ENCODE measurements at regions of chr22 and their contacts with region 1.

Region 1: DNA sequence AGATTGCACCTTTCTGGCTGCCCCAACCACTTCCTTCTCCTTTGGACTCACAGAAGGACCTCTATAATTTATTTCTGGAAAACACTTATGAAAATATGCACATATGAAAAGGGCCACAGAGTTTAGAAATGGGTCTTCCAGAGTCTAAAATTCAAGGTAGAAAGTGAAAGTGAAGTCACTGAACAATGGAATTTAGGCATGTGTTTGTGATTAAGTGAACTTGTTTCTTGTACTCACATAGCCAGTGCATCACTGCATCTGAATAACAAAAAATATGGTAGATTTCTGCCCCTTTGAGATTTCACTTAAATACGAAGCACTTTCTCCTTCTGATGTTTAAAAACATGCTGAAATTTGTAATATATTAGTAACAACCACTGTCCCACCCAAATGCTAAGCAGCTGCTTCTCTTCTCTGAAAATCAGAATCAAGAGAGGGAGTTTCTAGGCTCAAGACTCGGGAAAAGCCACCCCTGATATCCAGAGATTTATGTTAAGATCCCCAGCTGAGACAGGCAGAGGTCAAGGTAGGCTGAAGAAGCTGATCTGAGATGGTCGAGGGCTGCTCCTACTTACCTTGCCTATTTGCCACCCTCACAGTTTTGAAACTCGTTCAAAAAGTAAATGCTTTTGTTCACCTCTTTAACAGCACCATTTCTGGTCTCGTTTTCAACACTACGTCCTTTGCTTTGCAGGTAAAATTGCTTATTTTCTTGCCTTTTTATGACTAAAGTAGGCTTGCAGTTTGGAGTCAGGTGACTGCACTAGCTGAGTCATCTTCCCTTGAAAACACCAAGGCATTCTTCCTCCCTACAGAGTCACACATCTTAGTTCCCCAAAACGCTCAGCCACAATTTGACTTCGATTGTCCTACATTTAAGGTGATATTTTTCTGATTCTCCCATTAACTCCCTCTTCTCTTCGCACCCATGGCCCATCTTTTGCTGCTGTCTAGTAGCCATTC is at the start of gene XKR3:
- DNase-seq: peak; percentile 58
- H3K4me3 Mint-ChIP-seq: peak within 1 kb of the TSS; percentile 38
- H3K27ac Mint-ChIP-seq: peak within 1 kb of the TSS; percentile 54
- H3K4me1 Mint-ChIP-seq: peaks cover 19% of the 10 kb centered on the region
- H3K27me3 Mint-ChIP-seq: no peaks in the 10 kb centered on the region
- total RNA-seq, gene XKR3: not detected

Region 2: GRCh38 chr22:16801088-16801487 is 23.9 kb before region 1 on chr22:
- CTCF ChIA-PET with region 1: no interaction called
- intact Hi-C with region 1: no loop called
- DNase-seq: no peak
- H3K4me3 Mint-ChIP-seq: no peak overlapping the region
- H3K27ac Mint-ChIP-seq: no peak overlapping the region
- H3K4me1 Mint-ChIP-seq: no peaks in the 10 kb centered on the region
- H3K27me3 Mint-ChIP-seq: no peaks in the 10 kb centered on the region

Region 3: GRCh38 chr22:17035246-17035645 is 210.2 kb after region 1 on chr22:
- CTCF ChIA-PET with region 1: no interaction called
- intact Hi-C with region 1: loop called (anchors 10 kb)
- DNase-seq: no peak
- H3K4me3 Mint-ChIP-seq: peak overlapping the region; percentile 16
- H3K27ac Mint-ChIP-seq: no peak overlapping the region
- H3K4me1 Mint-ChIP-seq: peaks cover 13% of the 10 kb centered on the region
- H3K27me3 Mint-ChIP-seq: peaks cover 9% of the 10 kb centered on the region

Region 4: DNA sequence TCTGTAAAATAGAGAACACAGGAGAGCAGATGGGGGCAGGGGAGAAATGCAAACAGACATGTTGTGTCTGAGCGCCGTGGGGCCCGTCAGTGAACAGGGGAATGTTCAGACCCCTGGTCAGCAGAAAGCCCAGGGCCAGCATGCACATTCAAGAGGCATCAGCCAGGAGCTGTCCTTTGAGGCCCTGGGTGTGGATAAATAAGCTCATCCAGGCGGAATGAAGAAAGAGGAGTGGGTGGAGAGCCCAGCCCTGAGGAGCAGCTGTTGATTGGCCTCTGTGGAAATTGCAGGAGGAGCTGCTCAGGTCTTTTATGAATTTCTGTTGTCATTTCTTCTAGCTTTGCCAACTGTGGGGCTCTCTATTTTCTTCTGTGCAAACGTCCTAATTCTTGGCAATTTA is 494.5 kb after region 1 on chr22:
- CTCF ChIA-PET with region 1: no interaction called
- intact Hi-C with region 1: no loop called
- DNase-seq: no peak
- H3K4me3 Mint-ChIP-seq: no peak overlapping the region
- H3K27ac Mint-ChIP-seq: no peak overlapping the region
- H3K4me1 Mint-ChIP-seq: no peaks in the 10 kb centered on the region
- H3K27me3 Mint-ChIP-seq: no peaks in the 10 kb centered on the region

Measured in activated naive CD4-positive, alpha-beta T cell treated with anti-CD3 and anti-CD28 coated beads for 36 hours (primary cell).